Thyroid gland (tissue), 4 donors: ENCODE measurements at regions of chr20 and their contacts with region 1.

Region 1: GRCh38 chr20:44683263-44684046 is 31.7 kb upstream of the CCN5 start:
- DNase-seq: peak; percentile 54 to 65
- H3K4me3 ChIP-seq: no peak overlapping the region
- H3K27ac ChIP-seq: no peak overlapping the region
- H3K4me1 ChIP-seq: peaks cover 0 to 4% of the 10 kb centered on the region in 2 donors
- H3K27me3 ChIP-seq: no peaks in the 10 kb centered on the region
- CTCF ChIP-seq: peak in 5 of 6 experiments; percentile 31 to 53 (median 46)
- POLR2A ChIP-seq: no peak

Region 2: DNA sequence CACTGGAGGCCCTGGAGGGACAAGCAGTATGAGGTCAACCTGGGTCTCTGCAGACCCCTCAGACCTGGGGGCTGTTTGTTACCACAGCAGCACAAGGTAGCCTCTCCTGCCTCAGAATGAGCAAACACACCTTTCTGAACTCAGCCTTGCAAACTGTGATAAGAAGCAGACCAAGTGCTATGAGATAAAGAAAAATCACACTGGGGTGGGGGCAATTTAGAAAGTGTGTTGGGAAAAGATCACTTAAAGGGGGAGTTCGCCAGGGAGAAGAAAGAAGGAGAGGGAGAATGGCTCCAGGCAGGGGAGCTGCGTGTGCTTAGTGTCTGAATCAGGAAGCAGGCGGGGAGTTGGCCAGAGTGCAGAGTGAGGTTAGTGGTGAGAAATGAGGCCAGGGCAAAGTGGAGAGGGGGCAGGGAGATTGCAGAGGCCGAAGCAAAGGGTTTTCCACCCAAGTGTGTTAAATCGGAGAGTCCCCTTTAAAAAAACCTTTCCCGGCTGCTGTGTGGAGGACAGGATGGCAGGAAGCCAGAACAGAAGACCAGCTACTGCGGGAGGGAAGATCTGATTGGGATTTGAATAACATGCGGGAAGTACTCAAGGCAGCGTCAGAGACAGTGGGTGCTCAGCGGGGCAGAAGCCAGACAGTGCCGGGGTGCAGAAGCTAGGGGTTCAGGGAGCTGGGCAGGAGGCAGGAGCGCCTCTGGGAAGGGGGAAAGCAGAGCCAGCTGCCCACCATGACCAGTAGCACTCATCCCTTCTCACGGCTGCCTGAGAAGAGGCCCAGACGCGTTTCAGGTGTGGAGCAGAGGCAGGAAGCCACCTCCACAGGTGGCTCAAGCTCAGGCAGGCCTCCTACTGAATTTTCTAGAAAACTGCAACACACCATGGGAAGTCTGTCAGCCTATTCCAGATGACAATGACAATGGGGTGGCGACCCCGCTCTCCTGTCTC is 41.0 kb before region 1 on chr20:
- intact Hi-C with region 1: no loop called
- DNase-seq: peak; percentile 83 to 84
- H3K4me3 ChIP-seq: peak overlapping the region in 1 of 3 donors; percentile 13
- H3K27ac ChIP-seq: peak overlapping the region; percentile 57 to 91 (median 70)
- H3K4me1 ChIP-seq: peaks cover 6 to 33% of the 10 kb centered on the region in 2 donors
- H3K27me3 ChIP-seq: no peaks in the 10 kb centered on the region
- CTCF ChIP-seq: peak in 3 of 6 experiments; percentile 2 to 44 (median 29)
- POLR2A ChIP-seq: peak in 1 of 2 donors; percentile 14

Region 3: GRCh38 chr20:44733341-44734069 is 50.0 kb after region 1 on chr20:
- intact Hi-C with region 1: loop called (anchors 2 kb)
- DNase-seq: peak; percentile 69 to 74
- H3K4me3 ChIP-seq: no peak overlapping the region
- H3K27ac ChIP-seq: no peak overlapping the region
- H3K4me1 ChIP-seq: peaks cover 6 to 22% of the 10 kb centered on the region in 2 donors
- H3K27me3 ChIP-seq: no peaks in the 10 kb centered on the region
- CTCF ChIP-seq: peak; percentile 77 to 95 (median 90)
- POLR2A ChIP-seq: no peak

Region 4: DNA sequence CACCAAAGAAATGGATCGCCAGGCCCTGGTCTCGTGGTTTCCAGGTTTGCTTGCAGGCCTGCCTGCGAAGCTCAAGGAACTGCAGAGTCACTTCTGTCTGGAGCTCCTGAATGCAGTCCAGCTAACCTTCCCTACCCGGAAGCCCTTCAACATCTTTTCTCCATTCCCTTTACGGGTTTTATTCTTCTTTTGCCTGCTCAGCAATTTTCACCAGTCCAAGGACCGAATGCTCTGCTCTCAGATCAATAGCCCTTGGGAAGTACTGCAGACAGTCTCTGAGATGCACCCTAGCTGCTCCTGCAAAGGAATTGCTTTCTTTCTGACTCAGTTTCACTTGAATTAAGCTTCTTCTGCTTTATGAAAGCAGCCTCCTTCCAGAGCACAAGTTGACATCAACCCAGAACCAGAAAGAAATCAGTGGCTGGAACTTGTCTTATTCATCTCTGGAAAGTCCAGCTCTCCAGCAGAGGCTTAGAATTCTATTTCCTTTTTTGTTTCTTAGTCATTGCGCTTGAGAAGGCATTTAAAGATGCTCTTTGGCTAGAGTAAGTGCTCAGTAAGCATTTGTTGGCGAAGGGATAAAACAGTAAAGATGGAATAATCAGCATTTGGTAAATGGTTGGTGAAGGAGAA is 183.4 kb after region 1 on chr20:
- intact Hi-C with region 1: loop called (anchors 5 kb)
- DNase-seq: no peak
- H3K4me3 ChIP-seq: no peak overlapping the region
- H3K27ac ChIP-seq: no peak overlapping the region
- H3K4me1 ChIP-seq: peaks cover 19 to 25% of the 10 kb centered on the region in 2 donors
- H3K27me3 ChIP-seq: no peaks in the 10 kb centered on the region
- CTCF ChIP-seq: no peak
- POLR2A ChIP-seq: no peak